Posterior cingulate gyrus (tissue), 11 donors: ENCODE measurements at regions of chr10 and their contacts with region 1.

Region 1: DNA sequence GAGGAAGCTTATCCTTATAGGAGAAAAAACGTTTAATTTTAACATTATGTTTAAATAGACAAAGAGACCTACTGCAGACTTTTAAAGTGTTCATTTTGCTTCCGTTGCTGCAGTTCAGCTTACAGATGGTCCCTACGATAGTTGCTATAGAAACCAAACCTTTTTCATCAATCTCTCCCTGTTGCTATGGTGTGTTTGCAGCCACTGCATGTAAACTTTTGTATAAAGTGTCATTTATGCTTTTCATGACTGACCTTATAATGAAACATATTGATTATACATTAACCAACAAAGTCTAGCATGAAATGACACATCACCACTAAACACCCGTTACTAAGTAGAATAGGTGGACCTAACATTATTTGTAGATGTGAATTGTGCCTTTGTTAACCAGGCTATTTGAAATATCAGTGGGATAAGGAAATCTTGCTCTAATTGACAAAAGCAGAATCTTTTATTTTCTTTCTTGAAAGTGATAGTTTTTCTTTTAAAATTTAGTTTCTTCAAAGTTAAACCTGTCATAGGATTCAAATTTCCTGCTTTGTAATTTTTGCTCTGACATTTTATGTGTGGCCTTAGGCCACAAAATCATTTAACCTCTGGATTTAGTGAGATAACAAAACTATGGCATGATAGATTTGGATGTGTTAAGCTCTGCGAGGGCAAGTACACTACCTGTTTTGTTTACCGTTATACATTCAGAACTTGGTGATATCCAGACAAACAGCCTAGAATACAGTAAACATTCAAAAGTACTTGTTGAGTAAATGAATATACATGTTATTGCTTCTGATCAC is 64.0 kb downstream of the CACNB2 start:
- DNase-seq: no peak

Region 2: GRCh38 chr10:18140149-18140956 is 63.9 kb before region 1 on chr10 and contains the start of gene CACNB2:
- intact Hi-C with region 1: loop called (anchors 5 kb)
- DNase-seq: peak; percentile 21 to 95 (median 70)

Region 3: DNA sequence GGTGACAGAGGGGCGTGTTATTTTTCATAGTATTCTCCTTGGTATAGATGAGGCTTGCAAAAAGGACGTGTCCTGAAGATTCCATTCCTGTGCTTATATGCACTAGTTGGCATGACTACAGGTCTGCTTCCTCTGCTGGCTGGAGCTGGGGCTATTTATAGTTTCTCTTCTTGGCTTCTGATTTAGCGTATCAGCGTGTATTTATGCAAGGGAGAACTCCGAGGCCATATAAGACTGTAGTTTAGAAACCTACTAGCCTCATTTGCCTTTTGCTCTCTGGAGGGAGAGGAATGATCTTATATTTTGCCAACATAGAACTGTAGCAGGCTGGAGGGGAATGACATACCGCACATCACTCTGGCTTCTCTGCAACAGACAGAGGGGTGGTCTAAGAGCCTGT is 24.3 kb before region 1 on chr10:
- intact Hi-C with region 1: no loop called
- DNase-seq: no peak

Region 4: GRCh38 chr10:19654576-19654975 is 1450.3 kb after region 1 on chr10:
- intact Hi-C with region 1: no loop called
- DNase-seq: no peak